Activated CD4-positive, alpha-beta T cell treated with anti-CD3 and anti-CD28 coated beads for 36 hours (primary cell): ENCODE measurements at regions of chr4 and their contacts with region 1.

Region 1: DNA sequence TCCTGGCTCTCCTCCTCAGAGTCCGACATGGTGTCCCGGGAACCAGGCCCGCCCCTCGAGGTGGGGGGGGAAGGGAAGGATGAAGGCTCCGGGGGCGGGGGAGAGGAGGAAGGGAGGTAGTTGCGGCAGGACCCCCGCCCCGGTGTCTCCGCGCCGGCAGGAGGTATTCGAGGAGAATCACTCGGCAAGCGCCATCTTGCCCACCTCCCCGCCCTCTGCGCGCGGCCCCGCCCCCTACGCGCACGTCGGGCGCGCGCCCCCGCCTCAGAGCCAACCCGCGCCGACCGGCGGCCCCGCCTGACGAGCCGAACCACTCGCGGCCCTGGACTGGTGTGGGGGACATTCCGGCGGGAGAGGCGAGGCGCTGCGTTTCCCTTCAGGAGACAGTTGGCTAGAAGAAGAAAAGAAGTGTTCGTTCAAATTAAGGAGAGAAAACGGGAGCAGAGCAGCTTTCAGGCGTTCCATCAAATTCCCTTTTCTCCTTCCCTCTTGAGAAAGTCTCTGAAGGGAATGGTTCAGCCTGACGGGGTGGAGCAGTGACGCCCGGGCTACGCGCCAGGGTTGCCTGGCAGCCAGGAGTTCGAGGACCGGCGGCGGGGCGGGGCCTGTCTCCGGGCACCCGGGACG is at the start of gene RAB28:
- DNase-seq: peak; percentile 95
- ATAC-seq: peak; percentile 94
- H3K4me3 Mint-ChIP-seq: peak within 1 kb of the TSS; percentile 93
- H3K27ac Mint-ChIP-seq: peak within 1 kb of the TSS; percentile 99
- H3K4me1 Mint-ChIP-seq: peaks cover 22% of the 10 kb centered on the region
- H3K27me3 Mint-ChIP-seq: peaks cover 8% of the 10 kb centered on the region
- total RNA-seq, gene RAB28: 12.7 to 17.5 TPM

Region 2: GRCh38 chr4:13627606-13628301 is 143.5 kb after region 1 on chr4 and contains the start of gene BOD1L1:
- CTCF ChIA-PET with region 1: no interaction called
- POLR2A ChIA-PET with region 1: no interaction called
- intact Hi-C with region 1: loop called (anchors 1 to 5 kb)
- DNase-seq: peak; percentile 89
- ATAC-seq: peak; percentile 79
- H3K4me3 Mint-ChIP-seq: peak within 1 kb of the TSS; percentile 80
- H3K27ac Mint-ChIP-seq: peak within 1 kb of the TSS; percentile 91
- H3K4me1 Mint-ChIP-seq: peaks cover 43% of the 10 kb centered on the region
- H3K27me3 Mint-ChIP-seq: no peaks in the 10 kb centered on the region
- total RNA-seq, gene BOD1L1: 32.4 to 42.7 TPM

Region 3: DNA sequence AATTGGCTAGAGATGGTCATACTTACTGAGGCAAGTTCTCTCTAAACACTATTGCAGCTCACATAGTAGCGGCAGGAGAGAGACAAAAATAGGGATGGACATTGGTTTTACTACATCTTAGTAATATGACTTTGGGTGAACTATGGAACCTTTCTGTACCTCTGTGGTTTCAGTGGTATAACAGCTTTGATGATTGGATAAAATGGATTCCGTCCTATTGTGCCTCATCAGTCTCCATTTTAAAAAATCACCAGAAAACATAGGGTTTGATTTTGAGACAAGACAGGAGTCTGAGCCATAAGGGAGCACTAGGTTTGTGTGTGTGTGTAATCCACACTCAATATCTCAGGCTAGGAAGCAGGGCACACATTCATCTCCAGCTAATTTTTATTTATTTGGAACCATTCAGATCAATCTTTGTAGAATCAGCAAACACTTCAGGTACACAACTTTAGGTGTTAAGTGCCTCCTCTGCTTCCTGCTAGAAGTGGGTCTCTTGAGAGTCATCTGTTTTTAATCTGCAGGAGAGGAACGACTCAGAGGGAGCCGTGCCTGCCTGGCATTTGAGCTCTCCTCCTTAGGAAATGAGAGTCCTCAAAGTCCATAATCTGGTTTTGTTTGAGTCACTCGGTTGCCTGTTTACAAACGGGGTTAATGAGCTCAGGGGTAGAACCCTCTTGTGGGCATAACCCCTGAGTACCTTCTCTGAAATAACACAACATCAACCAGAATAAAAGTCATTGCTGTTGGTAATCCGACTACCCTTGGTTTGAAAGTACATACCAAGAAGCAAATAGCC is 381.8 kb after region 1 on chr4:
- CTCF ChIA-PET with region 1: no interaction called
- POLR2A ChIA-PET with region 1: no interaction called
- intact Hi-C with region 1: no loop called
- DNase-seq: no peak
- ATAC-seq: no peak
- H3K4me3 Mint-ChIP-seq: no peak overlapping the region
- H3K27ac Mint-ChIP-seq: no peak overlapping the region
- H3K4me1 Mint-ChIP-seq: no peaks in the 10 kb centered on the region
- H3K27me3 Mint-ChIP-seq: no peaks in the 10 kb centered on the region